AG04450 (cell line): ENCODE measurements at regions of chr12 and their contacts with region 1.

Region 1: DNA sequence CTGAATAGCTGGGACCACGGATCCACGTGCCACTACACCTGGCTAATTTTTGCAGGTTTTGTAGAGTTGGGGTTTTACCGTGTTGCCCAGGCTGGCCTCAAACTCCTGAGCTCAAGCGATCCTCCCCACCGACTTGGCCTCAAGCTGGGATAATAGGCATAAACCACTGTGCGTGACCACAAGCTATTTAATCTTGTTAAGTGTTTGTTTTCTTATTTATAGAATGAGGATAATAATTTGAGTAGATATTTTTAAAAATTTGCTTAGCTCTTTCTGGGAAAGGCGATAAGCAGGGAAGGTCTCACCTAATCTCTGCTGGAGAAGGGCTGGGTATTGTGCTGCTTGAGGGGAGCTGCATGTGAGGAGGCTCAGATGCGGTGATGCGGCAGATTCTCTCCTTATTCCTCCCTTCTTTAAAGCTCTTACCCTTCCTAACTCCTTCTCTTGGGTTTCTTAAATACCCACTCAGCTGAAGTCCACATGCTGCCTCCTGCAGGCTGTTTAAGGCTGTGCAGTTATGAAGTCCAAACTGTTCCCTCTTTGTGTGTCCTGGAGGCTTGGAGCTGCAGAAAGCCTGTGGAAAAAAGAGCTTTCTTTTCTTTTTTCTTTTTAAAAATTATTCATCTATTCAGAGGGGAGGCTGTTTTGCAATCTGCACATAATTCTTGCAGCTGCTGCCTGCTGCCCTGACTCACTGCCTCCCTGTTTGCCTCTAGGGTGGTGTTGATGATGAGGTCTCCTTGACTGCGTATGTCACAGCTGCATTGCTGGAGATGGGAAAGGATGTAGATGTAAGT is 37.9 kb downstream of the A2ML1 start:
- DNase-seq: no peak
- H3K4me3 ChIP-seq: no peak overlapping the region
- H3K27ac ChIP-seq: no peak overlapping the region
- H3K27me3 ChIP-seq: no peaks in the 10 kb centered on the region
- CTCF ChIP-seq: peak; percentile 66

Region 2: DNA sequence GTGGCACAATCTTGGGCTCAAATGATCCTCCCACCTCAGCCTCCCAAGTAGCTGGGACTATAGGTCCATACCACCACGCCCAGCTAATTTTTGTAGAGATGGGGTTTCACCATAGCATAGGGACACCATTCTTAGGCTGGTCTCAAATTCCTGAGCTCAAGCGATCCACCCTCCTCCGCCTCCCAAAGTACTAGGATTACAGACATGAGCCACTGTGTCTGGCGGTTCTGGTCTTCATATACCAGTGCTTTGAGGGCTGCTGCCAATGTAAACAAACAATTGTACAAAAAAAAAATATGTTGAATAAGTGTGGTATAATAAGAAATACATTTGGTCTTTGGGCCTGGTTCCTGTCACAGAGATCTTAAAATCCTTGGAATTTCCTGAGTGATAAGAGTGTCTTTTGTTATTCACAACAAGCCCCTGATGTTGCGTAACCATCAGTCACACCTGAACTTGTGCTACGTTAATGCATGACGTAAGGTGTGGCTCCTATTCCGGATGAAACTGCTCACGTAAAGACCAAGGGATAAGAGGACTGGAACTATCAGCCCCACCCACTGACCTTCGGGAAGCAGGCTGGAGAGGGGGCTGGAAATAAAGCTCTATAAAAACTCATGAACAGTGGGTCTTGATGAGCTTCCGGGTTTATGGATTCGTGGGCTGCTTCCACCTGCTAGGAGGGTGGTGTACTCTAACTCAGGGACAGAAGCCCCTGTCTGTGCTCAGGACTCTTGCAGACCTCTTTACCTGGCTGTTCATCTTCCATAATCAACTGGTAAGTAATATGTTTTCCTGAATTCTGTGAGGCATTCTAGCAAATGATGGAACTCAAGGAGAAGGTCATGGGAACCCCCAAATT is 179.1 kb before region 1 on chr12:
- CTCF ChIA-PET with region 1: interaction called, 42 read pairs
- POLR2A ChIA-PET with region 1: no interaction called
- DNase-seq: no peak
- H3K4me3 ChIP-seq: no peak overlapping the region
- H3K27ac ChIP-seq: no peak overlapping the region
- H3K27me3 ChIP-seq: peaks cover 3% of the 10 kb centered on the region
- CTCF ChIP-seq: no peak

Region 3: GRCh38 chr12:8834230-8834629 is 26.1 kb before region 1 on chr12:
- CTCF ChIA-PET with region 1: no interaction called
- POLR2A ChIA-PET with region 1: no interaction called
- DNase-seq: no peak
- H3K4me3 ChIP-seq: no peak overlapping the region
- H3K27ac ChIP-seq: no peak overlapping the region
- H3K27me3 ChIP-seq: no peaks in the 10 kb centered on the region
- CTCF ChIP-seq: no peak

Region 4: DNA sequence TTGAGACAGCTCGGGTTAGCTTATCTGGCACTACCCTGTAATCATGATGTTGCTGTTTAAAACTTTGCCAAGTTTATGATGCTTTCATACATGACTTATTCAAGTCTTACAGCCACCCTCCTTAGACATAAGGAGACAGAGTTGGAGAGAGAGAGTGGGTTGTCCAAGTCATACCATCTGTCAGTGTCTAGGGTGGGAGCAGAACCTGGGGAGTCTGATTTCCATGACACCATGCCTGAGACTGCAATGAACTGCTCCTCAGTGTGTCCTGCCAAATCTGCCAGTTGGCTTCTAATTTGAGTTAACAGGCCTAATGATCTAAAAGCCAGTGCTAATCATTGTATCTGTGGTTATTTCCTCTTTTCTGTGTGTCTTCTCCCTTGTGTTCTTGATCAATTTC is 10.2 kb after region 1 on chr12:
- CTCF ChIA-PET with region 1: interaction called, 13 read pairs
- POLR2A ChIA-PET with region 1: no interaction called
- DNase-seq: no peak
- H3K4me3 ChIP-seq: no peak overlapping the region
- H3K27ac ChIP-seq: no peak overlapping the region
- H3K27me3 ChIP-seq: no peaks in the 10 kb centered on the region
- CTCF ChIP-seq: no peak